ENCODE measurements at regions of chr6 and their contacts with region 1.

Region 1: DNA sequence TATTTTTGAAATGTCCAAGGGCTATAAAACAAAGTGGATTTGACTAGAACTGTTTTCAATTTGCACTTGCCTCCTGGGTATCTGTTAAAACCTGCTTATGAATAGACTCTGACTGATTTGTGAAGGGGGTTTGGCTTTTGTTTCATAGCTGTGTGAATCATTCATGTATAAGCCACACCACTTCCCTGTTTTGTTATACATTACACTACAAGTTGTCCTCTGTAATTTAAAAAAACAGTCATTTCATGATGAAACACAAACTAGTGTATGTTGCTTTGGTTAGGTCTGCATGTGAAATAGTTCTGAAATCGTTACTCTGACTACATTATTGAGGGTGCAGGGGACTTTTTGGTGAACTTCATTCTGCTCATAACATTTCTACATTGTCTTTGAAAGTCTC is 121.7 kb downstream of the NKAIN2 start:
- DNase-seq: peak; percentile 66
- H3K4me3 Mint-ChIP-seq: no peak overlapping the region
- H3K27ac Mint-ChIP-seq: peak overlapping the region; percentile 79
- H3K4me1 Mint-ChIP-seq: peaks cover 21% of the 10 kb centered on the region
- H3K27me3 Mint-ChIP-seq: no peaks in the 10 kb centered on the region
- CTCF ChIP-seq: no peak

Region 2: DNA sequence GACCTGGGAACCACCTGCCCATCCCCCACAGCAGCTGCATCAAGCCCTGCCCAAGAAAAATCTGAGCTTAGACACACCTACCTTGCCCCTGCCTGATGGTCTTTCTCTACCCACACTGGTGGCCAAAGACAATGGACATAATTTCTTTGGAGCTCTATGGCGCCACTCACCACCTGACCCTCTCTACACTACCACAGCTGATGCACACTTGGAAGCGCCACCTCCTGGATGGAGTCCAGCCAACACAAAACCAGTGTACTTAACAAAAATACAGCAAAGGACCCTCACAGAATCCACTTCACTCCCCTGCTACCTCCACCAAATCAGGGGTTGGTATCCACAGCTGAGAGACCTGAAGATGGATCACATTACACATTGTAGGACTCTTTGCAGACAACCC is 969.0 kb before region 1 on chr6:
- CTCF ChIA-PET with region 1: no interaction called
- POLR2A ChIA-PET with region 1: no interaction called
- intact Hi-C with region 1: no loop called
- DNase-seq: no peak
- H3K4me3 Mint-ChIP-seq: no peak overlapping the region
- H3K27ac Mint-ChIP-seq: no peak overlapping the region
- H3K4me1 Mint-ChIP-seq: no peaks in the 10 kb centered on the region
- H3K27me3 Mint-ChIP-seq: no peaks in the 10 kb centered on the region
- CTCF ChIP-seq: no peak

Region 3: GRCh38 chr6:123207967-123208510 is 717.3 kb before region 1 on chr6:
- CTCF ChIA-PET with region 1: no interaction called
- POLR2A ChIA-PET with region 1: no interaction called
- intact Hi-C with region 1: no loop called
- DNase-seq: no peak
- H3K4me3 Mint-ChIP-seq: no peak overlapping the region
- H3K27ac Mint-ChIP-seq: no peak overlapping the region
- H3K4me1 Mint-ChIP-seq: no peaks in the 10 kb centered on the region
- H3K27me3 Mint-ChIP-seq: no peaks in the 10 kb centered on the region
- CTCF ChIP-seq: no peak

Region 4: DNA sequence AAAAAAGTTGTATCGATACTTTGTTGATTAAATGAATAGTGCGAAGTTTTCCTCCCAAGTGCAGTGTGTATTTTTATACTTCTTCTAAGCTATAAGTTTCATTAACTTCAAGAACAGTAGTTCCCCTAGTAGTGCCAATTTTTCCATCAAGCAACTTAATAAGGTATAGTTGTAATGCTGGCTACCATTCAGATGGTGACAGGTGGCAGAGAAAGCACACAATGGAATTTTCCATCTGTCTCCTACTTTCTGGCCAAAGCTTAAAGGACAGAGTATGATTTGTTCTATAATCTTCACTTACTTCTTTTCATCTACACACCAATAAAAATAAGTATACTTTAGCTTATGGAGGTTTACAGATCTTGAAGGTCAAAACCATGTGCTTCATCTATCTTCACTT is 309.4 kb after region 1 on chr6:
- CTCF ChIA-PET with region 1: no interaction called
- POLR2A ChIA-PET with region 1: no interaction called
- intact Hi-C with region 1: loop called (anchors 10 kb)
- DNase-seq: no peak
- H3K4me3 Mint-ChIP-seq: no peak overlapping the region
- H3K27ac Mint-ChIP-seq: no peak overlapping the region
- H3K4me1 Mint-ChIP-seq: no peaks in the 10 kb centered on the region
- H3K27me3 Mint-ChIP-seq: no peaks in the 10 kb centered on the region
- CTCF ChIP-seq: no peak

Measured in MCF 10A (cell line).